ENCODE measurements at regions of chr5 and their contacts with region 1.

Region 1: GRCh38 chr5:137743031-137743640 is 7.2 kb upstream of the KLHL3 start:
- DNase-seq: peak; percentile 41
- H3K4me3 ChIP-seq: no peak overlapping the region
- H3K27ac ChIP-seq: no peak overlapping the region
- H3K4me1 ChIP-seq: peaks cover 0 to 3% (median 0%) of the 10 kb centered on the region in 4 donors
- H3K27me3 ChIP-seq: no peaks in the 10 kb centered on the region
- CTCF ChIP-seq: peak; percentile 55 to 65 (median 61)
- EP300 ChIP-seq: no peak
- POLR2A ChIP-seq: no peak

Region 2: GRCh38 chr5:137629646-137630045 is 113.5 kb before region 1 on chr5:
- in situ Hi-C with region 1: loop called in 1 of 4 experiments (anchors 25 kb)
- intact Hi-C with region 1: loop called (anchors 2 kb)
- DNase-seq: no peak
- H3K4me3 ChIP-seq: no peak overlapping the region
- H3K27ac ChIP-seq: no peak overlapping the region
- H3K4me1 ChIP-seq: peaks cover 0 to 4% (median 0%) of the 10 kb centered on the region in 4 donors
- H3K27me3 ChIP-seq: no peaks in the 10 kb centered on the region
- CTCF ChIP-seq: peak; percentile 78 to 95 (median 84)
- EP300 ChIP-seq: no peak
- POLR2A ChIP-seq: no peak

Region 3: DNA sequence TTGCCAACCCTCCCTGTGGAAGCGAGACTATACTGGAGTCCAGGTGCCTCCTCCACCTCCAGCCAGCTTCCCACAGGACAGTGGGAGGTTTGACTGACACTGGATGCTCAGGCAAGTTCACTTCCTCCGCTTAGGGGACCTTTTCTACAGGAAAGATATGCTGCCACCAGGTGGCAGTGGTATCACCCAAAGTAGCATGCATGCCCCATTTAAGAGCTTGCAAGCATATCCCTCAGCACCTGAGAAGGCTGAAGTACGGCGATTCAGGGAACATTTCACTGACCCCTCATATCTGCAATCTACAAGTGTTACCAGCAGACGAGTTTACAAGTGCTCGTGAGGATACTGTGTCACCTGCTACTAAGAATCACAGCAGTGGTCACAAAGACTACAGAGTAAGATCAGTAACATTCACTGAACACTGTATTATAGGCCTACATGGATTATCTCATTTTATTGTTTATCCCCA is 82.8 kb before region 1 on chr5:
- in situ Hi-C with region 1: loop called in 3 of 4 experiments (anchors 10 kb)
- intact Hi-C with region 1: no loop called
- DNase-seq: peak; percentile 74
- H3K4me3 ChIP-seq: no peak overlapping the region
- H3K27ac ChIP-seq: no peak overlapping the region
- H3K4me1 ChIP-seq: no peaks in the 10 kb centered on the region
- H3K27me3 ChIP-seq: no peaks in the 10 kb centered on the region
- CTCF ChIP-seq: peak; percentile 65 to 73 (median 67)
- EP300 ChIP-seq: no peak
- POLR2A ChIP-seq: no peak

Measured in transverse colon (tissue), 4 donors.